Endothelial cell of umbilical vein (primary cell): ENCODE measurements at regions of chr1 and their contacts with region 1.

Region 1: GRCh38 chr1:68470388-68470970 is 20.7 kb upstream of the RPE65 start:
- DNase-seq: peak; percentile 50
- H3K4me3 ChIP-seq: no peak overlapping the region
- H3K27ac ChIP-seq: no peak overlapping the region
- H3K4me1 ChIP-seq: no peaks in the 10 kb centered on the region
- H3K27me3 ChIP-seq: no peaks in the 10 kb centered on the region
- CTCF ChIP-seq: peak; percentile 52 to 58
- POLR2A ChIP-seq: no peak

Region 2: DNA sequence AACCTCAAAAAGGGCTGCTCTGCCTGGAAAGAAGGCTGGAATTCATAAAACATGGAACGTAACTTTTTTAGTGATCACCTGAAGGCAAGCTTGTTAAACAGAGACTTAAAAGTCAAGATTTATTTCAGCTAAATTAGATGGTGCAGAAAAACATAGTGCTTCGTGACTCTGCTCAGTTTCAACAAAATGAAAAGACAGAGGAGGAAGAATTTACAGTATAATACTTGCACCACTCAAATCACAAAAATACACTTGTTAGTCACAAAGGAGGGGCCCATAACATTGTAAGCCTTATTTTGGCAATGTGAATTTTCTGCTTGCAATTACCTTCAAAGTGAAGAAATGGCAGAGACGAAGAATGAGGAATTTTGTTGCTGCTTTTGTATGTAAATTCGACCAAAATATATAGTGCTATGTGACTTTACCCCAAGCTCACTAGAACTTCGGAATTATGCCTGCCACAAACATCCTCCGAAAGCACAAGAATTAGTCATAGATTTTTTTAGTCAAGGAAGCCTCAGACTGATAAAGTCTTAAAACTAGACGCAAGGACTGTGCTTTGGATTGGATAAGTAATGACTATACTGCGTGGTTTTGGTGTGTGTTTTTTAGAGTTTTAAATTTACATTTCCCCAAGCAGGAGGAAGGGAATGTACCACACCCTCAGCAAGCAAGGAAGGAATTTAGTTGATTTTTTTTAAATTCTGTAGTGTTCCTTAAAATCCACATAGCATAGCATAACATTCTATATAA is 248.7 kb before region 1 on chr1:
- CTCF ChIA-PET with region 1: no interaction called
- POLR2A ChIA-PET with region 1: no interaction called
- dilution Hi-C with region 1: no loop called
- intact Hi-C with region 1: no loop called
- DNase-seq: peak; percentile 35
- H3K4me3 ChIP-seq: no peak overlapping the region
- H3K27ac ChIP-seq: no peak overlapping the region
- H3K4me1 ChIP-seq: peaks cover 14% of the 10 kb centered on the region
- H3K27me3 ChIP-seq: no peaks in the 10 kb centered on the region
- CTCF ChIP-seq: no peak
- POLR2A ChIP-seq: no peak

Region 3: DNA sequence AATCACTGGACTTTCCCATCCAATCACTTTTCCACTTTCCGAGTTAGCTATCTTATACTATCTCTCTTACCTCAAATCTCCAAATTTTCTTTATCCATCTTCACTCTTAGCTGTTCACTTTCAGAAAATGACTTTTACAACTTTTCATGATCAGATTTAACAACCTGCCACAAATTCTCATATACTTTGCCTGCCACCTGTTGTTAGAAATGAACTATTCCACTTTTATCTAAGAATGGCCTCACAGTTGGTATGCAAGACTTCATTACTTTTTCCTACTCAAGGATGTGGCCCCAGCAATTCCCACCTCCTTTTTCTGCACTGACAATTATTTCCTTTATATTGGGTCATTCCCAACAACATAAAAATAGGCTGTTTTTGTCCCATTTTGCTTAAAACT is 120.0 kb after region 1 on chr1:
- CTCF ChIA-PET with region 1: interaction called, 38 read pairs
- POLR2A ChIA-PET with region 1: interaction called, 3 read pairs
- dilution Hi-C with region 1: no loop called
- intact Hi-C with region 1: loop called (anchors 1 kb)
- DNase-seq: peak; percentile 2
- H3K4me3 ChIP-seq: no peak overlapping the region
- H3K27ac ChIP-seq: no peak overlapping the region
- H3K4me1 ChIP-seq: no peaks in the 10 kb centered on the region
- H3K27me3 ChIP-seq: peaks cover 0 to 2% of the 10 kb centered on the region in 2 experiments
- CTCF ChIP-seq: no peak
- POLR2A ChIP-seq: no peak

Region 4: GRCh38 chr1:69700770-69701169 is 1230.3 kb after region 1 on chr1:
- CTCF ChIA-PET with region 1: interaction called, 8 read pairs
- POLR2A ChIA-PET with region 1: no interaction called
- dilution Hi-C with region 1: no loop called
- intact Hi-C with region 1: loop called (anchors 1 kb)
- DNase-seq: peak; percentile 11
- H3K4me3 ChIP-seq: no peak overlapping the region
- H3K27ac ChIP-seq: no peak overlapping the region
- H3K4me1 ChIP-seq: no peaks in the 10 kb centered on the region
- H3K27me3 ChIP-seq: no peaks in the 10 kb centered on the region
- CTCF ChIP-seq: peak in 1 of 2 donors; percentile 42
- POLR2A ChIP-seq: no peak